Activated CD8-positive, alpha-beta T cell treated with anti-CD3 and anti-CD28 coated beads for 36 hours (primary cell): ENCODE measurements at regions of chr3 and their contacts with region 1.

Region 1: GRCh38 chr3:39288300-39288808 is 8.5 kb upstream of the CX3CR1 start:
- DNase-seq: peak; percentile 92
- ATAC-seq: peak; percentile 98
- H3K4me3 Mint-ChIP-seq: no peak overlapping the region
- H3K27ac Mint-ChIP-seq: peak overlapping the region; percentile 4
- H3K4me1 Mint-ChIP-seq: peaks cover 30% of the 10 kb centered on the region
- H3K27me3 Mint-ChIP-seq: no peaks in the 10 kb centered on the region
- CTCF ChIP-seq: peak; percentile 92

Region 2: GRCh38 chr3:39101022-39101689 is 187.2 kb before region 1 on chr3:
- CTCF ChIA-PET with region 1: interaction called, 50 read pairs
- POLR2A ChIA-PET with region 1: no interaction called
- intact Hi-C with region 1: loop called (anchors 5 kb)
- DNase-seq: peak; percentile 62
- ATAC-seq: peak; percentile 80
- H3K4me3 Mint-ChIP-seq: no peak overlapping the region
- H3K27ac Mint-ChIP-seq: no peak overlapping the region
- H3K4me1 Mint-ChIP-seq: peaks cover 19% of the 10 kb centered on the region
- H3K27me3 Mint-ChIP-seq: no peaks in the 10 kb centered on the region
- CTCF ChIP-seq: peak; percentile 85

Region 3: DNA sequence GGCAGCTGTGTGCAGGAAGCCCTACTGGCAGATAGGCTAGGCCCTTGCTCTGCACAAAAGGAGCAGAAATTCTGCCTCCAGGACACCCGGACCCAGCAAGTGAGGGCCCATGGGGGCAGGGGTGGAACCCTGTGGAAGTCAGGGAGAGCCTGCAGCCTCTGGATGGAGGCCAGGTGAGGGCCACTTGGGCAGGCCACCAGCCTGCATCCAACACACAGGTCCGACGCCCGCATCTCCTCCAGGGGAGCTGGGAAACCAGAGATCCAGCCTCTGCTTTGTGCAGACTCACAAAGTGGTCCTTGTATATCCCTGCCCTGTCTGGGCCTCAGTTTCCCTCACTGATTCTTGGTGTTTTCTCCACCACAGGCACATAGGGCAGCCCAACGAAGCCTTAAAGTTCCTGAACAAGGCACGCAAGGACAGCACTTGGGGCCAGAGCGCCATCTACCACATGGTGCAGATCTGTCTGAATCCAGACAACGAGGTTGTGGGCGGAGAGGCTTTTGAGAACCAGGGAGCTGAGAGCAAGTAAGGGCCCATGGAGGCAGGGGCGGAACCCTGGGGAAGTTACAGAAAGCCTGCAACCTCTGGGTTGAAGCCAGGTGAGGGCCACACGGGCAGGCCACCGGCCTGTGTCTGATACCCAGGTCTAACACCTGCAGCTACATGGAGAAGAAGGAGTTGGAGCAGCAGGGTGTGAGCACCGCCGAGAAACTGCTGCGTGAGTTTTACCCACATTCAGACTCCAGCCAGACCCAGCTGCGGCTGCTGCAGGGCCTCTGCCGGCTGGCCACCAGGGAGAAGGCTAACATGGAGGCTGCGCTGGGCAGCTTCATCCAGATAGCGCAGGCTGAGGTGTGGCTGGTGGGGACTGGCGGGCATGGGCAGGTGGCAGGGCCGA is 151.6 kb before region 1 on chr3:
- CTCF ChIA-PET with region 1: interaction called, 103 read pairs
- POLR2A ChIA-PET with region 1: no interaction called
- intact Hi-C with region 1: no loop called
- DNase-seq: no peak
- ATAC-seq: no peak
- H3K4me3 Mint-ChIP-seq: no peak overlapping the region
- H3K27ac Mint-ChIP-seq: no peak overlapping the region
- H3K4me1 Mint-ChIP-seq: peaks cover 30% of the 10 kb centered on the region
- H3K27me3 Mint-ChIP-seq: no peaks in the 10 kb centered on the region
- CTCF ChIP-seq: no peak

Region 4: GRCh38 chr3:39180546-39181346 is 107.6 kb before region 1 on chr3:
- CTCF ChIA-PET with region 1: interaction called, 754 read pairs
- POLR2A ChIA-PET with region 1: interaction called, 3 read pairs
- intact Hi-C with region 1: no loop called
- DNase-seq: peak; percentile 92
- ATAC-seq: peak; percentile 79
- H3K4me3 Mint-ChIP-seq: peak overlapping the region; percentile 69
- H3K27ac Mint-ChIP-seq: peak overlapping the region; percentile 71
- H3K4me1 Mint-ChIP-seq: peaks cover 52% of the 10 kb centered on the region
- H3K27me3 Mint-ChIP-seq: no peaks in the 10 kb centered on the region
- CTCF ChIP-seq: no peak

Region 5: GRCh38 chr3:39216176-39216790 is 72.1 kb before region 1 on chr3:
- CTCF ChIA-PET with region 1: interaction called, 78 read pairs
- POLR2A ChIA-PET with region 1: no interaction called
- intact Hi-C with region 1: no loop called
- DNase-seq: no peak
- ATAC-seq: no peak
- H3K4me3 Mint-ChIP-seq: no peak overlapping the region
- H3K27ac Mint-ChIP-seq: no peak overlapping the region
- H3K4me1 Mint-ChIP-seq: peaks cover 13% of the 10 kb centered on the region
- H3K27me3 Mint-ChIP-seq: peaks cover 6% of the 10 kb centered on the region
- CTCF ChIP-seq: no peak

Region 6: GRCh38 chr3:39267631-39268548 is 20.5 kb before region 1 on chr3:
- CTCF ChIA-PET with region 1: interaction called, 275 read pairs
- POLR2A ChIA-PET with region 1: no interaction called
- intact Hi-C with region 1: no loop called
- DNase-seq: peak; percentile 93
- ATAC-seq: peak; percentile 88
- H3K4me3 Mint-ChIP-seq: peak overlapping the region; percentile 51
- H3K27ac Mint-ChIP-seq: peak overlapping the region; percentile 96
- H3K4me1 Mint-ChIP-seq: peaks cover 52% of the 10 kb centered on the region
- H3K27me3 Mint-ChIP-seq: peaks cover 2% of the 10 kb centered on the region
- CTCF ChIP-seq: no peak

Region 7: GRCh38 chr3:39378088-39378487 is 89.7 kb after region 1 on chr3:
- CTCF ChIA-PET with region 1: interaction called, 167 read pairs
- POLR2A ChIA-PET with region 1: no interaction called
- intact Hi-C with region 1: loop called (anchors 5 kb)
- DNase-seq: peak; percentile 74
- ATAC-seq: peak; percentile 87
- H3K4me3 Mint-ChIP-seq: no peak overlapping the region
- H3K27ac Mint-ChIP-seq: no peak overlapping the region
- H3K4me1 Mint-ChIP-seq: peaks cover 5% of the 10 kb centered on the region
- H3K27me3 Mint-ChIP-seq: no peaks in the 10 kb centered on the region
- CTCF ChIP-seq: peak; percentile 75